ENCODE measurements at regions of chr14 and their contacts with region 1.

Region 1: GRCh38 chr14:88492272-88493089 is 62.3 kb downstream of the PTPN21 start:
- DNase-seq: peak; percentile 84
- H3K4me3 Mint-ChIP-seq: no peak overlapping the region
- H3K27ac Mint-ChIP-seq: no peak overlapping the region
- H3K4me1 Mint-ChIP-seq: peaks cover 10% of the 10 kb centered on the region
- H3K27me3 Mint-ChIP-seq: no peaks in the 10 kb centered on the region
- CTCF ChIP-seq: peak; percentile 69

Region 2: DNA sequence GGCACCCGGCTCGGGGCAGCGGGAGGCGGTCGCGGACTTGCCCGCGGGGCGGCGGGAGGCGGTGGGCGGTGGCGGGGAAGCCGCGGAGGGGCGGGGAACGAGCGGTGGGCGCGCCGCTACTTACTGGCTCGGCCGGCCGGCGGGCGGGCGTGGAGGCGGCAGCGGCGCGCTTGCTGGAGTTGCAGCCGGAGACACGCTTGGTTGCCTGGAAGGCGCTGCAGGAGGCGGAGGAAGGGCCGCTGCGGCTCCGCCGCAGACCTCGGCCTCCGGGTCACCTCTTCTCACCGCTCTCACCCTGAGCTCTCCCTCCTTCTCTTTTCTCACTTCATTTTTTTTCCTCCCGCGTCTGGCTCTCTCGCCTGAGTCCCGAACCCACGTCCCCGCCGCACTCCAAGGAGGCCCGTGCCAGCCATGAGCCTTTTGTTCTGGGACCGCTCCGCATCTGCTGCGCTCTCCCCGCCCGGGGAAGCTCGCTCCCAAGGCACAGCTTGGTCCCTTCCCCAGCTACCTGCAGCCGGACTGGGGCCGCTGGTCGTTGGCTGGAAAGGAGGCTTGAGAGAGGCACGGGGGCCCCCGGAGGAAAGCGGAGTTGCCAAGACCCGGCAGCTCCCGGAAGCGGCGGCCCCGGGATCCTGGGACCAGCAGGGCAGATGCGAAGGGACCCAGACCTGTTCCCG is 168.8 kb before region 1 on chr14:
- CTCF ChIA-PET with region 1: no interaction called
- intact Hi-C with region 1: no loop called
- DNase-seq: peak; percentile 6
- H3K4me3 Mint-ChIP-seq: peak overlapping the region; percentile 72
- H3K27ac Mint-ChIP-seq: no peak overlapping the region
- H3K4me1 Mint-ChIP-seq: peaks cover 7% of the 10 kb centered on the region
- H3K27me3 Mint-ChIP-seq: no peaks in the 10 kb centered on the region
- CTCF ChIP-seq: no peak

Region 3: DNA sequence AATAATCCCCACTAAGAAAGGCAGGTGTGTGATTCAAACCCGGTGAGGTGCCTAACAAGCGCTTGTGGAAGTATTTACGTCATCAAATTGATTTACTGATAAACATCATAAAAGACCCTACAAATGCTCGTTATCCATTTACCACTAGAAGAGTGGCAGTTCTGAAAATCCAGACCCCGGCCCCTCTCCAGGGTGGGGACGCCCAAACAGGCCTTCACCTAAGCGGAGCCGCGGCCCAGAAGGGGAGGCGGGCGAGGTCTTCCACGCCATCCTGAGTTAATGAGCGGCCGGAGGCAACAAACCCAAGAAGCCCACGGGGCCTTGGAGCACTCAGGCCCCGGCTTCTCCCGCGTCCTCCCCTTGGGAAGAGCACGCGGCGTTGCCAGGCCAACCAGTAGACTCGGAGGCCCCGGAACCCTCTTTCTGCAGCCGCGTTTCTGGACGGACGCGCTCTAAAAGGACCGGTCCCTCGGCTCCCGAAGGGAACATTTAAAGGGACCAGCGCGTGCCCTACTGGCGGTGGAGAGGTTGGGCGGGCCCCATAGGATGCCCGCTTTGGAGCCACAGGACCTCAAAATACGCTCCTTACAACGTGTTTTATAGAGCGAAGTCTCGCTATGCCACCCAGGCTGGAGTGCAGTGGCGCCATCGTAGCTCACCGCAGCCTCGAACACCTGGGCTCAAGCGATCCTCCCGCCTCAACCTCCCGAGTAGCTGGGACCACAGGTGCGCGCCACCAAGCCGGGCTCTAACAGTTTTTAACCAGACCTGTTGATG is 58.8 kb after region 1 on chr14:
- CTCF ChIA-PET with region 1: interaction called, 3 read pairs
- intact Hi-C with region 1: loop called (anchors 2 kb)
- DNase-seq: peak; percentile 88
- H3K4me3 Mint-ChIP-seq: peak overlapping the region; percentile 73
- H3K27ac Mint-ChIP-seq: no peak overlapping the region
- H3K4me1 Mint-ChIP-seq: peaks cover 29% of the 10 kb centered on the region
- H3K27me3 Mint-ChIP-seq: no peaks in the 10 kb centered on the region
- CTCF ChIP-seq: peak; percentile 41

Region 4: DNA sequence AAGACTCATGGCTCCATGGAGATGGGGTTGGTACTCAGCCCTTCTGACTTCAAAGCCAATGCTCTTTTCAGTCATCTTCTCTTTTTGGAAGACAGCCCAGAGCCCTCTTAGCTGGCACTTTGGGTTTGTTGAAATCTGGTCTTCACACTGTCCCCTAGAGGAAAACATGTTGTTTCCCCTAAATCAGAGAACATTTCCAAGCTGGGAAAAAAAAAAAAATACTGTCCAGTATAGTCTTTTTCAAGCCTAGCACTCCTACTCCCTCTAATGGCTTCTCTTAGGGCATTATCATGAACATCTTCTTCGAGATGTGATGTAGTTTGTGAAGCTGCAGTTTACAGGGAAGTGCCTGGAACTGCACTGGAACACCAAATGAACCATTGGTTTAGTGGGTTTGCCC is 67.4 kb after region 1 on chr14:
- CTCF ChIA-PET with region 1: interaction called, 7 read pairs
- intact Hi-C with region 1: loop called (anchors 1 kb)
- DNase-seq: no peak
- H3K4me3 Mint-ChIP-seq: no peak overlapping the region
- H3K27ac Mint-ChIP-seq: no peak overlapping the region
- H3K4me1 Mint-ChIP-seq: peaks cover 20% of the 10 kb centered on the region
- H3K27me3 Mint-ChIP-seq: no peaks in the 10 kb centered on the region
- CTCF ChIP-seq: no peak